Activated CD4-positive, alpha-beta memory T cell treated with anti-CD3 and anti-CD28 coated beads, Interleukin-2, amount 10 ng/mL, durations not matched to agents 7 days and 5 days (primary cell): ENCODE measurements at regions of chr3 and their contacts with region 1.

Region 1: DNA sequence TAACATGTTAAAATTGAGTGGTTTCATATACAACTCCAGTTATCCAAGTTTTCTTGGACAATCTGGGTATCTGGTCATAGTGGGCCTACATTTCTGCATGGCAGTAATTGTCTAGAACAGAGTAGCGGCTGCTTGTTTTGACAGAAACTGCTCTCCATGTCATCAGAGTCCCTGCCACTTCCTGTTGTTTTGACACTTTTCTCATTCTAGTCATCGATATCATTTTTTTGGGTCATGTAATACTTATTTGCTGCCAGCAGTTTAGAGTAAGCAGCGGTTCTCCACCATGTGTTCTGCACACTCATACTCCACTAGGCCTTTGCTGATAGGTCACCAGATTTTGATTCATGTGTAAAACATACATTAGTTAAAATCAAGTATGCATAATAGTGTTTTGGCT is 81.5 kb downstream of the SLC25A26 start:
- DNase-seq: peak; percentile 62
- H3K4me3 Mint-ChIP-seq: no peak overlapping the region
- H3K27ac Mint-ChIP-seq: peak overlapping the region; percentile 96
- H3K4me1 Mint-ChIP-seq: peaks cover 74% of the 10 kb centered on the region
- H3K27me3 Mint-ChIP-seq: no peaks in the 10 kb centered on the region

Region 2: GRCh38 chr3:66047311-66048050 is 254.8 kb before region 1 on chr3:
- CTCF ChIA-PET with region 1: no interaction called
- POLR2A ChIA-PET with region 1: no interaction called
- DNase-seq: no peak
- H3K4me3 Mint-ChIP-seq: no peak overlapping the region
- H3K27ac Mint-ChIP-seq: no peak overlapping the region
- H3K4me1 Mint-ChIP-seq: no peaks in the 10 kb centered on the region
- H3K27me3 Mint-ChIP-seq: peaks cover 5% of the 10 kb centered on the region

Region 3: GRCh38 chr3:66378256-66378823 is 76.1 kb after region 1 on chr3:
- CTCF ChIA-PET with region 1: interaction called, 12 read pairs
- POLR2A ChIA-PET with region 1: interaction called, 11 read pairs
- DNase-seq: peak; percentile 37
- H3K4me3 Mint-ChIP-seq: no peak overlapping the region
- H3K27ac Mint-ChIP-seq: peak overlapping the region; percentile 82
- H3K4me1 Mint-ChIP-seq: peaks cover 13% of the 10 kb centered on the region
- H3K27me3 Mint-ChIP-seq: no peaks in the 10 kb centered on the region

Region 4: GRCh38 chr3:66483406-66483906 is 181.2 kb after region 1 on chr3:
- CTCF ChIA-PET with region 1: no interaction called
- POLR2A ChIA-PET with region 1: interaction called, 10 read pairs
- DNase-seq: no peak
- H3K4me3 Mint-ChIP-seq: peak overlapping the region; percentile 6
- H3K27ac Mint-ChIP-seq: no peak overlapping the region
- H3K4me1 Mint-ChIP-seq: peaks cover 82% of the 10 kb centered on the region
- H3K27me3 Mint-ChIP-seq: no peaks in the 10 kb centered on the region

Region 5: DNA sequence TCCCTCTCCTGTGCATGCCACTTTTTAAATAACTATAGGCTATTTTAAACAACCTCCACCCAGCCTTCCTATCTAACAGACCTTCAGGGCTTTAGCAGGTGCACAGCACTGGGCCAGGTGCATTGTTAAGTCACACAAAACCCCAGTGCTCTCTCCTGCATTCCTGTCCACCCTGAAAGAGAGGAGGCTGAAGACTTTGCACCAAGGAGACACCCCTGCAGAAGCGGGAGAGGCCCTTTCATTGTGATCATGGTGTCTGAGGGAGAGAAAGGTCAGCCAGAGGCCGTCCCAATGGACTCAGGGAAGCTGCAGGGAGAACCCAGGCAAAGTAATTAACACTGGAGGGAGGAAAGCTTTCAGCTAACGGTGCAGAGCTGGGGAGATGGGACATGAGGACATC is 193.4 kb after region 1 on chr3:
- CTCF ChIA-PET with region 1: interaction called, 3 read pairs
- POLR2A ChIA-PET with region 1: interaction called, 14 read pairs
- DNase-seq: no peak
- H3K4me3 Mint-ChIP-seq: peak overlapping the region; percentile 14
- H3K27ac Mint-ChIP-seq: peak overlapping the region; percentile 61
- H3K4me1 Mint-ChIP-seq: peaks cover 89% of the 10 kb centered on the region
- H3K27me3 Mint-ChIP-seq: no peaks in the 10 kb centered on the region